ENCODE measurements at regions of chr14 and their contacts with region 1.

Region 1: DNA sequence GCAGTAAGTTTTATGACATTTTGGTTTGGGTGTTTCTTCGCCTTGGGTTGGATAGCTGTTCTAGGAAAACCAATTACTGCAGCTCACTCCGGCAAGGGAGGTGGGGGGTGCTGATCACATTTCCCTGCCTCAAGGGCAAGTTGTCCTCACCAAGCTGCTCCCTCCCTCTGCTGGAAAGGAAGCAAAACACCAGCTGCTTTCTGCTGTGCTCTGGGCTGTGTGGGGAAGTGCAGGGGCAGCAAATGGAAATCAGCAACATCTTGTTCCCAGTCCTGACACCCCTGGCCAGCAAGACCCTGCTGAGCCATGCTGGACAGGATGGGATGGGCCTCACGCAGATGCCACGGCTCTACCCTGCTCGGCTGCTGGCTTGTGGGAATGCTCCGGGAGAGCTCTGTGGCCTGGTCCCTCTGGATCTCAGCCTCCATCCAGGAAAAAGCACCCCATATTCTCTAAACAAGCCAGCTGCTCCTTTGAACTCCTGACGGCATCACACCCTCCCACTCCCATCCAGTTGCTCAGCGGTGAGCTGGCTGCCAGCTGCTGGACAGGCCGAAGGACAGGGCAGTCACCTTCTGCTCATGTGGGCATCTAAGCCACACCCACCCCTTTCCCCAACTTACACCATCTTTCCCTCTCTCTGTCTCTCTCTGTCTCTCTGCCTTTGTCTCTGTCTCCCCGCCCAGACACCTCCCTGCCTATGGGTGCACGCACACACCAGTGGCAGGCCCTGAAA is 52.4 kb upstream of the EIF5 start:
- DNase-seq: peak; percentile 53
- H3K4me3 ChIP-seq: no peak overlapping the region
- H3K27ac ChIP-seq: peak overlapping the region in 2 of 4 donors; percentile 28 to 40
- H3K4me1 ChIP-seq: peaks cover 0 to 21% (median 10%) of the 10 kb centered on the region in 4 donors
- H3K27me3 ChIP-seq: peaks cover 66% of the 10 kb centered on the region
- CTCF ChIP-seq: peak in 4 of 5 experiments; percentile 23 to 45 (median 30)
- EP300 ChIP-seq: no peak
- POLR2A ChIP-seq: no peak

Region 2: DNA sequence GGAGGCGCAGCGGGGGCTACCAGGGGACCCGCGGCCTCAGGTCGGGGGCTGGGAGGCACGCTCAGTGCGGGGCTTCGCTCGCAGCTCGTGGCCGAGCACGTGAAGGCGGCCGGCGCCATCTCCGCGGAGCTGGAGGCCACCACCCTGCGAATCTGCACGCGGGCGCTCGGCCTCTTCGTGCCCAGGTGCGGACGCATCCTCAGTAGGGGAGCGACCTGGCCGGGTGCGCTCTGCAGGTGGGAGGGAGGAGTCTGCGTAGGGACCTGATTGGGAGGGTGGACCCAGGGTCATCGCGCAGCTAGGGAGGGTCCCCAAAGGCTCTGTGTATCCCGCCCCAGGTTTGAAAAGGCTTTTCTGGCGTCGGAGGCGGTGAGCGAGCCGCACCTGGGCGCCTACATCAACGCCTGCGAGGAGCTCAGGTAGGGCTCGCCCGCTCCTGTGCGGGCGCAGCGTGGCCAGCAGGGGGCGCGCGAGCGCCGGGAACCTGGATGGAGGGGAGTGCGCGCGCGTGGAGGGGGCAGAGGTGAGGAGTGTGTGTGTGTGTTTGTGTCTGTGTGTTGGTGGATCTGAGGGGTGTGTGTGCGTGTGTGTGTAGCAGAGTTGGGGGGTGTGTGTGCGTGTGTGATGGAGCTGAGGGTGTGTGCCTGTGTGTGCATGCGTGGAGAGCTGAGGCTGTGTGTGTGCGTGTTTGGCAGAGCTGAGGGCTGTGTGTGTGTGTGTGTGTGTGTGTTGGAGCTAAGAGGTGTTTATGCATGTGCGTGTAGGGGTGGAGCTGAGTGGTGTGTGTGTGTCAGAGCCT is 176.8 kb before region 1 on chr14:
- in situ Hi-C with region 1: loop called in 1 of 4 experiments (anchors 10 kb)
- intact Hi-C with region 1: no loop called
- DNase-seq: peak; percentile 78
- H3K4me3 ChIP-seq: peak overlapping the region in 2 of 4 donors; percentile 2 to 27
- H3K27ac ChIP-seq: peak overlapping the region in 1 of 4 donors; percentile 41
- H3K4me1 ChIP-seq: peaks cover 12 to 39% (median 26%) of the 10 kb centered on the region in 4 donors
- H3K27me3 ChIP-seq: peaks cover 32% of the 10 kb centered on the region
- CTCF ChIP-seq: peak; percentile 97 to 99 (median 98)
- EP300 ChIP-seq: no peak
- POLR2A ChIP-seq: peak; percentile 31

Region 3: GRCh38 chr14:103512701-103513611 is 231.3 kb after region 1 on chr14:
- in situ Hi-C with region 1: no loop called
- intact Hi-C with region 1: no loop called
- DNase-seq: peak; percentile 69
- H3K4me3 ChIP-seq: no peak overlapping the region
- H3K27ac ChIP-seq: peak overlapping the region; percentile 73 to 79 (median 76)
- H3K4me1 ChIP-seq: peaks cover 11 to 22% (median 18%) of the 10 kb centered on the region in 4 donors
- H3K27me3 ChIP-seq: no peaks in the 10 kb centered on the region
- CTCF ChIP-seq: no peak
- EP300 ChIP-seq: no peak
- POLR2A ChIP-seq: peak; percentile 43